Spleen (tissue), 13 donors: ENCODE measurements at regions of chr10 and their contacts with region 1.

Region 1: DNA sequence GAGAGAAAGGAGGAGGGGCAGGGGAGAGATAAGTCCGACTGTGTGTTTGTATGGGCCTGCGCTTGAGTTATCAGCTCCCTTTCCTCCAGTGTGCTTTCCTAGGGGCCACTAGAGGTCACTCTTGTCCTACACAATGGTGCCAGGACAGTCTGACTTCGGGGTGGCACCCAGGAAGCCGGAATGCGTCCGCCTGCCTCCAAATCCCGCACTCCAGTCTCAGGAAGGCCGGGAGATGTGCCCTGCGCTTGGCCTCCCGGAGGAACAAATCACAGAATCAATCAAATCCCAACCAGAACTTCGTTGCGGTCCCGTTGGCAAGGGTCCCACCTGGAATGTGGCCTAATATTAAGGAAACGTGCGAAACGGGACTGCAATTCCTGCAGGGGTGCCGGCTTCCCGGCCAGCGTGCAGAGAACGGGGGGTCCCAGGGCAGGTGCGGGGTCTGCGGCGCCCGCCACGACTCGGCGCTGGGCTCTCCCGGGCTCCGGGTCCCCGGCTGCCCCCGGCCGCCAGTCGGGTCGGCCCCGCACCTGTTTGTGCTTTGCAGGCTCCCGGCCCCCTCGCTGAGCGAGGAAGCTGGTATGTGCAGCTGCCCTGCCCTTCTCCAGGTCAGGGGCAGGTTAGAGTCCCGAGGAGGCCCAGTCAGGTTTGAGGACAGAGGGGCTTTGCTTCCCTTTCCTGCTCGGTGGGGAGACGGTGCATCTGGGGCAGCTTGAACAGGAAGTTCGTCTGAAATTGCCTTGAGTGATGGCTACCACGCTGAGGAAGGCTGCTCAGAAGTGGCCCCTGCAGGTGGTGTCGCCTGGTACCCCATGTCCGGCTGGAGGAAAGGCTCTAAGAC is 21.0 kb upstream of the HPS1 start:
- DNase-seq: peak; percentile 87
- H3K4me3 ChIP-seq: peak overlapping the region; percentile 45 to 83 (median 52)
- H3K27ac ChIP-seq: peak overlapping the region in 4 of 8 donors; percentile 44 to 74 (median 57)
- H3K4me1 ChIP-seq: peaks cover 6 to 32% (median 18%) of the 10 kb centered on the region in 6 donors
- H3K27me3 ChIP-seq: peaks cover 0 to 55% (median 5%) of the 10 kb centered on the region in 7 donors
- CTCF ChIP-seq: peak; percentile 80 to 92 (median 87)
- POLR2A ChIP-seq: no peak

Region 2: GRCh38 chr10:98242823-98243222 is 224.9 kb before region 1 on chr10:
- intact Hi-C with region 1: no loop called
- DNase-seq: no peak
- H3K4me3 ChIP-seq: no peak overlapping the region
- H3K27ac ChIP-seq: no peak overlapping the region
- H3K4me1 ChIP-seq: peaks cover 0 to 5% (median 0%) of the 10 kb centered on the region in 6 donors
- H3K27me3 ChIP-seq: no peaks in the 10 kb centered on the region
- CTCF ChIP-seq: peak in 3 of 11 experiments; percentile 28 to 33 (median 31)
- POLR2A ChIP-seq: no peak

Region 3: DNA sequence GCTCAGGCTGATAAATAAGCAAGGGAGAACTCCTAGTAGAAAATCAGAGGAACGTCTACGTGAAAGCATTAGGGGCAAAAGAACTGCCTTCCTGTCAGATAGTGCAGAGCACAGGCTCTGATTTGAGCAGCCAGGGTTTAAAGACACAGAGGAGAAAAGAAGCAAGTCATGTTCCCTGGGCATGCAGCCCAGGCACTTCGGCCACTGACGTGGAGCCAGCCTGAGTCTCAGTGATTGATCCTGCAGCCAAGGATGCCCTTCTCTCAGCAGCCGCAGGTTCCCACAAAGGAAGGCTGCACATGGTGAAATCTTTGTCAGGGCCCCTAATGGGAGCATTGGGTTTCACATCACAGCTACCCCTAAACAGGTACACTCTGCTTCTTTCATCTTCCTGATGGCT is 140.7 kb after region 1 on chr10:
- intact Hi-C with region 1: no loop called
- DNase-seq: no peak
- H3K4me3 ChIP-seq: no peak overlapping the region
- H3K27ac ChIP-seq: no peak overlapping the region
- H3K4me1 ChIP-seq: no peaks in the 10 kb centered on the region
- H3K27me3 ChIP-seq: peaks cover 0 to 20% (median 0%) of the 10 kb centered on the region in 7 donors
- CTCF ChIP-seq: no peak
- POLR2A ChIP-seq: no peak

Region 4: GRCh38 chr10:98664331-98665042 is 196.8 kb after region 1 on chr10:
- intact Hi-C with region 1: loop called (anchors 5 kb)
- DNase-seq: no peak
- H3K4me3 ChIP-seq: no peak overlapping the region
- H3K27ac ChIP-seq: no peak overlapping the region
- H3K4me1 ChIP-seq: no peaks in the 10 kb centered on the region
- H3K27me3 ChIP-seq: peaks cover 0 to 19% (median 0%) of the 10 kb centered on the region in 7 donors
- CTCF ChIP-seq: peak in 10 of 11 experiments; percentile 15 to 67 (median 46)
- POLR2A ChIP-seq: no peak

Region 5: GRCh38 chr10:99248824-99249223 is 781.1 kb after region 1 on chr10:
- intact Hi-C with region 1: loop called (anchors 2 kb)
- DNase-seq: no peak
- H3K4me3 ChIP-seq: no peak overlapping the region
- H3K27ac ChIP-seq: no peak overlapping the region
- H3K4me1 ChIP-seq: no peaks in the 10 kb centered on the region
- H3K27me3 ChIP-seq: peaks cover 0 to 19% (median 0%) of the 10 kb centered on the region in 7 donors
- CTCF ChIP-seq: no peak
- POLR2A ChIP-seq: no peak